OCI-LY7 (cell line): ENCODE measurements at regions of chr13 and their contacts with region 1.

Region 1: GRCh38 chr13:85709072-85709471 is 90.1 kb downstream of the SLITRK6 start:
- DNase-seq: no peak
- H3K4me3 ChIP-seq: no peak overlapping the region
- H3K27ac ChIP-seq: no peak overlapping the region
- H3K4me1 ChIP-seq: no peaks in the 10 kb centered on the region
- CTCF ChIP-seq: no peak

Region 2: DNA sequence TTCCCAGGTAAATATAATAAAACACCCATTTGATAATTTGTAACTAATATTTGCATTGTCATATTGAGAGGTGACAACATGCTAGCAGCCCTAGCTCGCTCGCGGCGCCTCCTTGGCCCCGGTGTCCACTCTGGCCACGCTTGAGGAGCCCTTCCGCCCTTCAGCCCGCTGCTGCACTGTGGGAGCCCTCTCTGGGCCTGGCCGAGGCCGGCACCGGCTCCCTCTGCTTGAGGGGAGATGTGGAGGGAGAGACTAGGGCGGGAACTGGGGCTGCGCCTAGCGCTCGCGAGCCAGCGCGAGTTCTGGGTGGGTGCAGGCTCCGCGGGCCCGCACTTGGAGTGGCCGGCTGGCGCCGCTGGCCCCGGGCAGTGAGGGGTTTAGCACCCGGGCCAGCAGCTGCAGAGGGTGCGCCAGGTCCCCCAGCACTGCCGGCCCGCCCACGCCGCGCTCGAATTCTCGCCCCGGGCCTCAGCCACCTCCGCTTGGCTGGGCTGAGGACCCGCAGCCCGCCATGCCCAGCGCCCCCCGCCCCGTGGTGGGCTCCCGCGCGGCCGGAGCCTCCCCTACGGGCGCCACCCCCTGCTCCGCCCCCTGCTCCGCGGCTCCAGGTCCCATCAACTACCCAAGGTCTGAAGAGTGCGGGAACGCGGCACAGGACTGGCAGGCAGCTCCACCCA is 504.3 kb before region 1 on chr13:
- CTCF ChIA-PET with region 1: no interaction called
- POLR2A ChIA-PET with region 1: interaction called, 10 read pairs
- intact Hi-C with region 1: no loop called
- DNase-seq: no peak
- H3K4me3 ChIP-seq: no peak overlapping the region
- H3K27ac ChIP-seq: no peak overlapping the region
- H3K4me1 ChIP-seq: no peaks in the 10 kb centered on the region
- CTCF ChIP-seq: no peak

Region 3: GRCh38 chr13:85520445-85520844 is 188.6 kb before region 1 on chr13:
- CTCF ChIA-PET with region 1: no interaction called
- POLR2A ChIA-PET with region 1: no interaction called
- intact Hi-C with region 1: no loop called
- DNase-seq: no peak
- H3K4me3 ChIP-seq: no peak overlapping the region
- H3K27ac ChIP-seq: no peak overlapping the region
- H3K4me1 ChIP-seq: no peaks in the 10 kb centered on the region
- CTCF ChIP-seq: no peak